ENCODE measurements at regions of chr19 and their contacts with region 1.

Region 1: DNA sequence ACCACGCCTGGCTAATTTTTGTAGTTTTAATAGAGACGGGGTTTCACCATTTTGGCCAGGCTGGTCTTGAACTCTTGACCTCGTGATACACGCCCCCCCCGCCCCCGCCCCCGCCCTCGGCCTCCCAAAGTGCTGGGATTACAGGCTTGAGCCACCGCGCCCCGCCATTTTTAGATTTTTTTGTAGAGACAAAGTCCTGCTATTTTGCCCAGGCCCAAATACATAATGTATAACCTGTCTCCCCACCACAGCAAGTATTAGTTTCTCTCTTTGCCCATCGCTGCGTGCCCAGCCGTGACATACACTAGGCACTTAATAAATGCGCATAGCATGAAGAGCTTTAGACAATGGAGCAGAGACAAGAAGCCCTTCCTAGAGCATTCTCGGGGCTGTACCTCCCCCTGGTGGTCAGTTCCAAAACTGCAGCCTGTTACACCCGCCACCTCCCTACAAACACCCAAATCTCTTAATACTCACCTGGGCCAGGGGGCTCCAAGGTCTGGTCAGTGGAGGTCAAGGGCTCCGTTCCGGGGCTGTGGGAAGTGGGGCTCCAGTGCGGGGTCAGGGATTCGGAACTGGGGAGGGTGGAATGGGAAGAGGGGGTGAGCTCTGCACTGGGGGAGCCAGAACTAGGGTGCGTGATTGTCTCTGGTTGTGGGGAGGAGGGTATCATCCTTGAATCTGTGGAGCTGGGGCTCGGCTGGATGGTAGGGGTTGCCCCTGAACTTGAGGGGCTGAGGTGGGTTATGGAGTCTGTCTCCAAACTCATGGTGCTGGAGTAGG is 22.5 kb downstream of the IQCN start:
- DNase-seq: peak; percentile 74 to 79 (median 76)
- H3K4me3 ChIP-seq: no peak overlapping the region
- H3K4me3 Mint-ChIP-seq: no peak overlapping the region
- H3K27ac ChIP-seq: no peak overlapping the region
- H3K27ac Mint-ChIP-seq: peak overlapping the region in 2 of 7 donors; percentile 4 to 66
- H3K4me1 ChIP-seq: no peaks in the 10 kb centered on the region
- H3K4me1 Mint-ChIP-seq: peaks cover 1 to 7% (median 5%) of the 10 kb centered on the region in 4 donors
- H3K27me3 ChIP-seq: no peaks in the 10 kb centered on the region
- H3K27me3 Mint-ChIP-seq: peaks cover 4 to 9% of the 10 kb centered on the region in 2 donors

Region 2: DNA sequence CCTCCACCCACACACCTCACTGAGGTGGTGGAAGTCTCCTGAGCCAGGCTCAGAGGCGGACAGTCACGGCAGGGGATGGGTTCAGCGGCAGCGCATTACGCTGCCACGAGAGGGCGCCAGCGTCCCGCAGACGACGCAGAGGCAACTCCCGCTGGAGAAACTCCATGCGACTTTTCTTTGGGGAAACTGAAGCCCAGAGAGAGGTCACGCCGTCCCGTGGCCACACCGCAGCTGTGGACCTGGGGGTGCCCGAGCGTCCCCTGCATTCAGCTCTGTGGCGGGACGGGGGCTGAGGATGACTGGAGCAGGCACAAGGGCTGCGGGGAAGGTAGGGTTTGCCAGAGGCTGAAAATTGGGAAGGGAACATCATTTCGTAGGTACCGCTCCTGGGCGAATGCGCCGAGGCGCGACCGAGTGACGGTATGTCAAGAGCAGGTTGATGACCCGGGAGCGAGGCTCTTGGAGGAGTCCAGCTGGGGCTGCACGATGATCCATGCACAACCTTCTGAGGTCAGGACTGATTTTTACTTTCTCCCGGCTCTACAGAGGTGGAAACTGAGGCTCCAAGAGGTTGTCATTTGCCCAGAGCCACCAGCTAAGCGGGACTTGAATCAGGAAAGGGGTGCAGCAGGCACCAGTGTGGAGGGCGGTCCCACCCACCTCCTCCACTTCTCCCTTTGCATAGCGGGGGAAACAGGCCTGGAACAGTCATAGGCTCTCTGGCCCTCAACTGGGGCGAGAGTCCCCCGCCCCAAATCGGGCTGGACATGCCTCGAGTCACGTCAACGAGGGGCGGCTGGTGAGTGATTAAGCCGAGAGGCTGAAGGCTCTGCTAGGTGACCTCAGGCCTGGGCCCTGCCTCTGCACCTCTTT is 244.5 kb before region 1 on chr19:
- CTCF ChIA-PET with region 1: interaction called, 3 read pairs
- POLR2A ChIA-PET with region 1: no interaction called
- intact Hi-C with region 1: loop called (anchors 2 kb)
- DNase-seq: peak; percentile 75 to 85 (median 79)
- H3K4me3 ChIP-seq: peak overlapping the region; percentile 18 to 68
- H3K4me3 Mint-ChIP-seq: peak overlapping the region; percentile 86 to 95 (median 90)
- H3K27ac ChIP-seq: peak overlapping the region; percentile 95
- H3K27ac Mint-ChIP-seq: peak overlapping the region; percentile 95 to 100 (median 97)
- H3K4me1 ChIP-seq: peaks cover 56% of the 10 kb centered on the region
- H3K4me1 Mint-ChIP-seq: peaks cover 10 to 59% (median 28%) of the 10 kb centered on the region in 4 donors
- H3K27me3 ChIP-seq: no peaks in the 10 kb centered on the region
- H3K27me3 Mint-ChIP-seq: no peaks in the 10 kb centered on the region

Region 3: GRCh38 chr19:18131841-18132596 is 119.8 kb before region 1 on chr19:
- CTCF ChIA-PET with region 1: no interaction called
- POLR2A ChIA-PET with region 1: no interaction called
- intact Hi-C with region 1: no loop called
- DNase-seq: no peak
- H3K4me3 ChIP-seq: no peak overlapping the region
- H3K4me3 Mint-ChIP-seq: no peak overlapping the region
- H3K27ac ChIP-seq: no peak overlapping the region
- H3K27ac Mint-ChIP-seq: peak overlapping the region in 1 of 7 donors; percentile 84
- H3K4me1 ChIP-seq: no peaks in the 10 kb centered on the region
- H3K4me1 Mint-ChIP-seq: no peaks in the 10 kb centered on the region
- H3K27me3 ChIP-seq: no peaks in the 10 kb centered on the region
- H3K27me3 Mint-ChIP-seq: no peaks in the 10 kb centered on the region

Region 4: DNA sequence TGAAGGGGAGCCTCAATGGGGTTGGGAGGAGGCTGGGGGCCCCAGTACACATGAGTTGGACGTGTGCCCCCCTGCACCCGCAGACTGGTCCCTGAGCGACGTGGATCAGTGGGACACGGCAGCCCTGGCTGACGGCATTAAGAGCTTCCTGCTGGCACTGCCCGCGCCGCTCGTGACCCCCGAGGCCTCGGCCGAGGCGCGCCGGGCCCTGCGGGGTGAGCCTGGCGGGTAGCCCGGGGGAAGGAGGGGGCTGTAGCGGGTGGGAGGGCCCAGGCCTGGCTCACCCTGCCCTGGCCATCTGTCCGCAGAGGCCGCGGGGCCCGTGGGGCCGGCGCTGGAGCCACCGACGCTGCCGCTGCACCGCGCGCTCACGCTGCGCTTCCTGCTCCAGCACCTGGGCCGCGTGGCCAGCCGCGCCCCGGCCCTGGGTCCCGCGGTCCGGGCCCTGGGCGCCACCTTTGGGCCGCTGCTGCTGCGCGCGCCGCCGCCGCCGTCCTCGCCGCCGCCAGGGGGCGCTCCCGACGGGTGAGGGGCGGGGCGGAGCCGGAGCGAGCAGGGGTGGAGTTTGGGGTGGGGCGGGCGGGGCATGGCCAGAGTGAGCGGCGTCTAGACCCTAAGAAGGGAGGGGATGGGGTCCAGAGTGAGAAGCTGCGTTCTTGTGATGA is 90.7 kb before region 1 on chr19:
- CTCF ChIA-PET with region 1: interaction called, 8 read pairs
- POLR2A ChIA-PET with region 1: no interaction called
- intact Hi-C with region 1: loop called (anchors 1 kb)
- DNase-seq: peak; percentile 59 to 88 (median 81)
- H3K4me3 ChIP-seq: no peak overlapping the region
- H3K4me3 Mint-ChIP-seq: peak overlapping the region in 5 of 8 donors; percentile 46 to 69 (median 53)
- H3K27ac ChIP-seq: peak overlapping the region; percentile 51
- H3K27ac Mint-ChIP-seq: peak overlapping the region in 4 of 7 donors; percentile 52 to 75 (median 58)
- H3K4me1 ChIP-seq: peaks cover 17% of the 10 kb centered on the region
- H3K4me1 Mint-ChIP-seq: peaks cover 3 to 17% (median 8%) of the 10 kb centered on the region in 4 donors
- H3K27me3 ChIP-seq: no peaks in the 10 kb centered on the region
- H3K27me3 Mint-ChIP-seq: no peaks in the 10 kb centered on the region

Region 5: GRCh38 chr19:18203863-18204393 is 47.9 kb before region 1 on chr19 and contains the start of gene RAB3A:
- CTCF ChIA-PET with region 1: interaction called, 150 read pairs
- POLR2A ChIA-PET with region 1: interaction called, 6 read pairs
- intact Hi-C with region 1: loop called (anchors 1 kb)
- DNase-seq: peak; percentile 98 to 100 (median 100)
- H3K4me3 ChIP-seq: peak within 1 kb of the TSS; percentile 84 to 93
- H3K4me3 Mint-ChIP-seq: peak within 1 kb of the TSS; percentile 91 to 98 (median 96)
- H3K27ac ChIP-seq: peak within 1 kb of the TSS; percentile 63
- H3K27ac Mint-ChIP-seq: peak within 1 kb of the TSS; percentile 79 to 98 (median 98)
- H3K4me1 ChIP-seq: peaks cover 23% of the 10 kb centered on the region
- H3K4me1 Mint-ChIP-seq: peaks cover 13 to 33% (median 21%) of the 10 kb centered on the region in 4 donors
- H3K27me3 ChIP-seq: no peaks in the 10 kb centered on the region
- H3K27me3 Mint-ChIP-seq: peaks cover 0 to 1% of the 10 kb centered on the region in 2 donors
- total RNA-seq, gene RAB3A: 4.7 to 4.8 TPM

Region 6: GRCh38 chr19:18408053-18408476 is 156.3 kb after region 1 on chr19:
- CTCF ChIA-PET with region 1: no interaction called
- POLR2A ChIA-PET with region 1: no interaction called
- intact Hi-C with region 1: loop called (anchors 1 kb)
- DNase-seq: no peak
- H3K4me3 ChIP-seq: no peak overlapping the region
- H3K4me3 Mint-ChIP-seq: no peak overlapping the region
- H3K27ac ChIP-seq: no peak overlapping the region
- H3K27ac Mint-ChIP-seq: no peak overlapping the region
- H3K4me1 ChIP-seq: no peaks in the 10 kb centered on the region
- H3K4me1 Mint-ChIP-seq: peaks cover 3 to 7% (median 4%) of the 10 kb centered on the region in 4 donors
- H3K27me3 ChIP-seq: no peaks in the 10 kb centered on the region
- H3K27me3 Mint-ChIP-seq: peaks cover 0 to 2% of the 10 kb centered on the region in 2 donors

Region 7: DNA sequence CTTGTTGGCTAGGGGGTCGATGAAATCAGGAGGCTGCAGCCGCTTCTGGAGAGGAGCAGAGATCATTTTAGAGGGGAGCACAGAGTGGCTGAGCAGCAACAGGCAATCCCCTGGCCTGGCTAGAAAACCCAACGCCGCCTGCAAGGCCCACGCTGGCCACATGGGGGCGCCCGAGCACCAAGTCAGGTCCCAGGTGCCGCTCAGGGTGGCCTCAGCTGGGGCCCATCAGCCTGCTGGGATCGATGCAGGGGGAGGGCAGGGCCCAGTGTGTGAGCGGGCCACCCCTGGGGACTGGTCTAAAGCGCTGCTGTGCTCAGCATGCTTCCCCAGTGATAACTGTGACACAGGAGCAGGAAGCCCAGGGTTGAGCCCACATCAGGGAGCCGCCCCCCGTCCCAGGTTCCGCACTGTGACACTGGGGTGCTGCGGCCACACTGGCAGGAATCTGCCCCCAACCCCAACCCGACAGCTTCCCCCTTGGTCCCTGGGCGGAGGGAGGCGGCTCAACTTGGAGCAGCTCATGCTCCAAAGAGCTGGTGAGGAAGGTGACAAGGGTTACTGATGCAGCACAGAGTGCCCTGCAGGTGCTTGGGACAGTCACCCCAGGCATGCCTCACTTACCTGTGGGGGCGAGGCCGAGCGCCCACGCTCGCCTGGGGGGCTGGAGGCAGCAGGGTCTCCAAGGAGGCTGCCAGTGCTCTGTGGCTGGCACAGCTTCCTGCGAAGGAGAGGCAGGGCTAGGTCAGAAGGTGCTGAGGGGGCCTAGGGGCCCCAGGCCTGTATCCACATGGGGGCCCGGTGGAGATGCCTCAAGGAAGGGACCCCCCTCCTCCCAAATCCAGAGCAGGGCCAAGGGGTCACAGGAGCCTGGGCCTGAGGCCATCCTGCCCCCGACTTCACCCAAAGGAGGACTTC is 199.4 kb after region 1 on chr19:
- CTCF ChIA-PET with region 1: no interaction called
- POLR2A ChIA-PET with region 1: no interaction called
- intact Hi-C with region 1: no loop called
- DNase-seq: peak; percentile 80 to 87 (median 82)
- H3K4me3 ChIP-seq: no peak overlapping the region
- H3K4me3 Mint-ChIP-seq: peak overlapping the region in 1 of 8 donors; percentile 35
- H3K27ac ChIP-seq: no peak overlapping the region
- H3K27ac Mint-ChIP-seq: peak overlapping the region in 5 of 7 donors; percentile 22 to 77 (median 70)
- H3K4me1 ChIP-seq: peaks cover 5% of the 10 kb centered on the region
- H3K4me1 Mint-ChIP-seq: peaks cover 3 to 19% (median 7%) of the 10 kb centered on the region in 4 donors
- H3K27me3 ChIP-seq: no peaks in the 10 kb centered on the region
- H3K27me3 Mint-ChIP-seq: no peaks in the 10 kb centered on the region

Measured in CD4-positive, alpha-beta memory T cell (primary cell).